Head of caudate nucleus (tissue), 42 donors: ENCODE measurements at regions of chr12 and their contacts with region 1.

Region 1: GRCh38 chr12:76559400-76560085 is at the start of gene OSBPL8:
- DNase-seq: peak; percentile 91 to 99 (median 97)

Region 2: DNA sequence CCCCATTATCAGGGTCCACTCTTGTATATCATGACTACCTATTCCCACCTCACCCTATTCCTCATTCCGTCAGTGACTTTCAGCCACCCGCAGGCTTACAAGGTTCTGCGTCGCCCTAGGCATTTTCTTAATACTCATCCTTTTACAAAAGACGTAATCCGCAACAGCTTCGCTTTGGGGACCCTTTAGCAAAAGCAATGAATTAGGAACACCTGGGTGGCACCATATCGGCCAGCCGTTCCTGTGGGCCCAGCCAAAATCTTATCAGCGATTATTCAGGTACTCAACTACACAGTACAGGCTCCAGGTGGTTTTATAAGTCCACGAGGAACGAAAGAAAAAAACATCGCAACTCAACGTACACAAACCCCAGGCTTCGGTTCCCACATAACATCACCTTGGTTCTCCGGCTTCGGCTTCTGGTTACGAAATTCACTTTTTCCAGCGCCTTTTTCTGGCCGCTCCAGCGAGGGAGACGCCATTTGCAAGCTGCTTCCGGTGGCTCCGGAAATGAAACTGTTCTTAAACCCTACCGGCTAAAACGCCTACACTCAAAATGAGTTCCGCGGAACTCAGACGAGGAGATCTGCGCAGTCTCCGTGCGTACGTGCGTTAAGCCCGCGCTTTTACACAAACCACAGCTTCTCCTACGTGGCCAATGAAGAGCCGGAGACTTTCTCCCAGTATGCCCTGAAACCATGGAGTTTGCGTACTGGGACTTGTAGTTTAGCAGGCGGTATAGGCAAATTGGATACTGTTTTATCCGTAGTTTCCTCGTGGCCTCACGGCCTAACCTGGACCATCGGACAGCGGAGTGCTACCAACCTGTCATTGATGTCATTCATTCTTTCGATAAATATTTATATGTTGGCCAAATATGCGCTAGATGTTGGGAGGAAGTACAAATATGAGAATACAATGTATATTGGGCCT is 1048.2 kb before region 1 on chr12 and contains the start of gene KRR1:
- intact Hi-C with region 1: loop called (anchors 10 kb)
- DNase-seq: peak; percentile 90 to 98 (median 96)

Region 3: GRCh38 chr12:76763743-76764675 is 204.5 kb after region 1 on chr12 and contains the start of gene ZDHHC17:
- intact Hi-C with region 1: loop called (anchors 2 kb)
- DNase-seq: peak; percentile 77 to 96 (median 89)